Panc1 (cell line): ENCODE measurements at regions of chr3 and their contacts with region 1.

Region 1: DNA sequence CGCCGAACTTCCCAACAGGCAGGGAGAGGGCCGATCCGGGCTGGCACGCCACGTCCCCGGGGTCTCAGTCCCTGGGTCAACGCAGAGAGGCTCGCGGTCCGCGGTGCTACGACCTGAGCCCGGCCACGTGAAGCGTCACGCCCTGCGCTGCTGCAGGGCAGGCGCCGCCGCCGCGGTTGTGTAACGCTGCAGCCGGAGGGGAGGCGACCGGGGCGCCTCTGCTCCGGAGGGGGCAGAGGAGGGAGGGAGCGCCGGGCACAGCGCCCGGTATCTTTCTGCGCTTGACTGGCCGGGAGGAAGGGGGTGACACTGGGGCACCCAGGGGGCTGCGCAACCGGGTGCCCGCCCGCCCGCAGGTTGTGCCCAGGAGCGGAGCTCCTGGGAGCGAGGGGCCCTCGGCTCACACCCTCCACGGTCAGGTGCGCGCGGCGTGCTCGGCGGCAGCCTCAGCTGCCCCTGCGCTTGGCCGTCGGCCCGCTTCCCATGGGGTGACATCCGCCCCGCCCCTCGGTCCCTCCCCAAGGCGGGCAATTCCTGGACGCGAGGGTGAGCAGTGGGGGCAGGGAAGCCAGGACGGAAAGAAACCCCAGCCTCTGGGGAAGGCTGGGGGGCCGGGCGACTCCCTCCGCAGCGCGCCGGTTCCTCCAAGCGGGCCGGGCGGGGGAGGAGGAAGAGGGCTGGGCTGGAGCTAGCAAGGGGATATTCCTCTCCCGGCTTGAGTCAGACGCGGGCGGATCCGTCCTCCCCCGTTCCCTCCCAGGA is 852 bp upstream of the BHLHE40 start:
- DNase-seq: no peak
- ATAC-seq: peak; percentile 76
- H3K4me3 ChIP-seq: peak overlapping the region; percentile 54 to 58
- H3K27ac ChIP-seq: peak overlapping the region; percentile 97
- H3K4me1 ChIP-seq: peaks cover 18% of the 10 kb centered on the region
- H3K27me3 ChIP-seq: no peaks in the 10 kb centered on the region
- CTCF ChIP-seq: 0 out of 2 replicates have a peak, but pooled peaks have one; percentile 15

Region 2: DNA sequence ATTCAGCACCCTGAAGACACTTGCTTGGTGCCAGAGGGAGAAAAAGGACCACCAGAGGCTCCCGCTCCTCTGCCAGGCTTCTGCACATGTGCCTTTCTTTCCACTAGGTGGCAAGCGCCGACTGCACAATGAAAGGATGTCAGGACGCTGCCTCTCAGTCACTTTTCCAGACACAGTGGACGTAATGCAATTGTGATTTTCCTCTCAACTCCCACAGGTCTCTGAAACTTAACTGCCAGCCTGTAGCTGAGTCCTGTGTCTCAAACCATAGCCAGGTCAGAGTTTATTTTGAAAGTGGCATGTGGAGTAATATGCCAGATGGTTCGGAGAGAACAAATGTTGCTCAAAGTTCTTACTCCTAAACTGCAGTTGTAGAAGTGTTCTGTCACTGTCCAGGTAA is 322.3 kb before region 1 on chr3:
- CTCF ChIA-PET with region 1: no interaction called
- POLR2A ChIA-PET with region 1: no interaction called
- in situ Hi-C with region 1: no loop called
- intact Hi-C with region 1: loop called (anchors 5 kb)
- DNase-seq: no peak
- ATAC-seq: peak; percentile 99
- H3K4me3 ChIP-seq: no peak overlapping the region
- H3K27ac ChIP-seq: no peak overlapping the region
- H3K4me1 ChIP-seq: peaks cover 6% of the 10 kb centered on the region; the same call in 1 of the 2 replicates
- H3K27me3 ChIP-seq: no peaks in the 10 kb centered on the region
- CTCF ChIP-seq: peak; percentile 88

Region 3: DNA sequence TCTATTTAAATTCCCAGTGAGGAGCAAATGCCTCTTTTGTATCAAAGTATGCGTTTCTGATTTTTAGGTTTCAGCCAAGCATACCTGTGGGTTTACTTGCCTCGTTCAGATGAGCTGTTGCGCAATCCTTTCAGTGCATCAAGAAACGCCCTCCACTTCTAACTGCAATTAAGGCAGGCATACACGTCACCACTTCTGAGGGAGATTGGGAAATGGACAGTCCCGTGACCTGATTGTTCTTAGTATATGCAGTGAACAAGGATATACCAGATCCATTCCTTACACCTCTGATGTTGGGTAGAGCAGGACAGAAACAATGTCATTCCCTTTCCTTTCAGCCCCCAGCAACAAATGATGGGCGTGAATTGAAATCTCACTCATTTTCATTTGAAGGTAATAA is 266.2 kb before region 1 on chr3:
- CTCF ChIA-PET with region 1: interaction called, 14 read pairs
- POLR2A ChIA-PET with region 1: interaction called, 3 read pairs
- in situ Hi-C with region 1: no loop called
- intact Hi-C with region 1: no loop called
- DNase-seq: no peak
- ATAC-seq: no peak
- H3K4me3 ChIP-seq: no peak overlapping the region
- H3K27ac ChIP-seq: peak overlapping the region; percentile 23; the same call in 1 of the 2 replicates
- H3K4me1 ChIP-seq: peaks cover 5% of the 10 kb centered on the region
- H3K27me3 ChIP-seq: no peaks in the 10 kb centered on the region
- CTCF ChIP-seq: no peak

Region 4: DNA sequence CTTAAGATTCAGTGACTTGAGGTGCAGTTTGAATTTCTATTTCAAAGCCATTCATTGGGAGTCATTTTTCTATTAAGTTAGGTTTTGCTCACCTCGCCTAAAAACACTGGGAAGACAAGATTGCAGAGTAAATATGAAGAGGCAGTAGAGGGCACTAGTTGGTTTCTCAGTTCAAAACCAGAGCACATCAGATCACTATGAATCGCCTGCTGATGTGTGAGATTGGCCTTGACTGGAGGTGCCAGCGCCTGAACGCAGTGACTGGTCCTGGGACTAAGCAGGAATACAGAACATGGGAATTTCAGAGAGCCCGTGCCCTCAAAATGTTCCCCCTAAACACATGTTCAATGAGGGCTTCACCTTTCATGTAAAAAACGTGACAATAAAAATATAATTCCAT is 256.3 kb before region 1 on chr3:
- CTCF ChIA-PET with region 1: interaction called, 10 read pairs
- POLR2A ChIA-PET with region 1: interaction called, 9 read pairs
- in situ Hi-C with region 1: no loop called
- intact Hi-C with region 1: loop called (anchors 1 kb)
- DNase-seq: no peak
- ATAC-seq: peak; percentile 88
- H3K4me3 ChIP-seq: no peak overlapping the region
- H3K27ac ChIP-seq: peak overlapping the region; percentile 82
- H3K4me1 ChIP-seq: peaks cover 28% of the 10 kb centered on the region
- H3K27me3 ChIP-seq: no peaks in the 10 kb centered on the region
- CTCF ChIP-seq: peak; percentile 70

Region 5: GRCh38 chr3:4908433-4909157 is 69.8 kb before region 1 on chr3:
- CTCF ChIA-PET with region 1: no interaction called
- POLR2A ChIA-PET with region 1: no interaction called
- in situ Hi-C with region 1: no loop called
- intact Hi-C with region 1: no loop called
- DNase-seq: no peak
- ATAC-seq: no peak
- H3K4me3 ChIP-seq: no peak overlapping the region
- H3K27ac ChIP-seq: no peak overlapping the region
- H3K4me1 ChIP-seq: no peaks in the 10 kb centered on the region; the same call in 1 of the 2 replicates
- H3K27me3 ChIP-seq: no peaks in the 10 kb centered on the region
- CTCF ChIP-seq: no peak

Region 6: DNA sequence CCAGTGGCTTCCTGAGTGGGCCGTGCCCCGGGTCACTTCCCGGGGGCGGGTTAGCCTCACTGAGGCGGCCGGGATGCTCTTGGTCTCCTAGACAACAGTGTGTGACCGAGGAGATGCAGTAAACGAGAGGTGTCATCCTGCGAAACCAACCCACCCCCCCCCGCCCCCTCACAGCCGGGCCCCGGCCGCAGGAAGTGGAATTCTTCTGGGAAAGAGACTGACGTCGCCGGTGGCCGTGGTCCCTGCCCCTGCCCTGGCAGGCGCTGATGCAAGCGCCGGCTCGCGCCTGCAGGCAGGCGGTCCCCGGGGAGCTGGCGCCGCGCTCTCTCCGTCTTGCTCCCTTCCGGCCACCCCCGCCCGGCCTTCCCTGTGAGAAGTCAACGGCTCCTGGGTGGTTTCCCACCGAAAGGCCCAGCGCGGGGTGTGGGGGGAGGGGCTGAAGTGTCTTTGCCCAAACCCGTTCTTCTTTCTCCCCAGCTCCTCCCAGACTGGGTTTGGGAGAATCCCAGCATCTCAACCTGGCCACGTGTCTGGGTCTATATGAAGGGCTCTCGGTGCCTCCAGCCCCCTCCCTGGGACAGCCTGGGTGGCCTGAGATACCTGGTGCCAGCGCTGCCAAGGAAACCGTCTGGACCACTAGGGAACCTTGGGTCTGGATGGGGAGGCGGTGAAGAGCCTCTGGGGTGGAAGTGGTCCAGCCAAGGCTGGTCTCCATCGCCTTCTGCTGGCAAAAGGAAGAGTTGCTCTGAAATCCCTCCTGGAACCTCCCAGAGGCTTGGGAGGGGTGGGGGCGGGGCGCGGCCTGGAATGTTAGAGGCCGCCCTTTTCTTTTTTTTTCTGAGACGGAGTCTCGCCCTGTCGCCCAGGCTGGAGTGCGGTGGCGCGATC is 48.2 kb after region 1 on chr3:
- CTCF ChIA-PET with region 1: interaction called, 3 read pairs
- POLR2A ChIA-PET with region 1: interaction called, 25 read pairs
- in situ Hi-C with region 1: no loop called
- intact Hi-C with region 1: loop called (anchors 1 kb)
- DNase-seq: peak; percentile 68
- ATAC-seq: peak; percentile 82
- H3K4me3 ChIP-seq: peak overlapping the region; percentile 48 to 55
- H3K27ac ChIP-seq: peak overlapping the region; percentile 92
- H3K4me1 ChIP-seq: peaks cover 31% of the 10 kb centered on the region
- H3K27me3 ChIP-seq: no peaks in the 10 kb centered on the region
- CTCF ChIP-seq: peak; percentile 84